IMR-90 (cell line): ENCODE measurements at regions of chr7 and their contacts with region 1.

Region 1: DNA sequence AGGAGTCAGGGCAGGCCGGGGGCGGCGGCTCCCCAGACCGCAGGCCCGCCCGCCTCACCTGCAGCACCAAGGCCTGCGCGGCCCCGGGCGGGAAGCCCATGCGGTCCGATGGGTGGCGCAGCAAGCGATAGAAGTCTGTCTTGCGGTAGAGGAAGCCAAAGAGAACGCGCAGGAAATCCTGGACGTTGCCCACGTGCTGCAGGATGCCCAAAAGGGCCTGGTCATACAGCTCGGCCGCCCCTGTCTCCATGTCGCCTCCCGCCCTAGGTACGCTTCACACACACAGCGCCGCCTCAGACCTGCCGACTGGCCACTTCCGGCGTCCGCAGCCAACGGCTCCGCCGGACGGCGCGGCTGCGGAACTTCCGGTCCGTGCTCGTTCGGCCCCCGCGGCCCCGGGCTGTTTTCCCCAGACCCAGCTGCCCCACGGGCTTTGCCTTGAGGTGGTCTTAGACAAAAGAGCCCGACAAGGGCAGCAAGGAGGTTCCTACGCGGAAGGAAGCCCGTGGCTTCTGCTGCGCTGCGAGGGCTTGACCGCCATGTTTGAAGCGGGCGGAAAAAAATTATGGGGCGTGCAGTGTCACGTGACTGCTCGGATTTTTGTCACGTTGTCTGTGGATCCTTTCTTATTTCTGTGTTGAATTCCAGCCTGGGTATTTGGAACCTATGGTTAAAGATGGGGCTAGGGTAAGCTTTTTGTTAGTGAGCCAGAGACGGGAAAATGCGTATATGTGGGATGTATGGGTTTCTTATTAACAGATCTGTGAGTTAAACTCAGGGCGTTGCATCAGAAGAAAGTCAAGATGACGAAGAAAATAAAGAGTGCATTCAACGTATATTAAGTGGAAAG is at the start of gene NUDCD3:
- DNase-seq: peak; percentile 77
- ATAC-seq: peak; percentile 95
- H3K4me3 ChIP-seq: peak within 1 kb of the TSS; percentile 94
- H3K27ac ChIP-seq: peak within 1 kb of the TSS; percentile 97
- H3K4me1 ChIP-seq: peaks cover 2% of the 10 kb centered on the region; the same call in 1 of the 2 replicates
- H3K27me3 ChIP-seq: no peaks in the 10 kb centered on the region; the same call in 1 of the 2 replicates
- CTCF ChIP-seq: peak; percentile 11; the same call in 1 of the 2 replicates
- POLR2A ChIP-seq: peak; percentile 61; the same call in 1 of the 2 replicates
- RAD21 ChIP-seq: no peak; the same call in none of the 2 replicates
- total RNA-seq, gene NUDCD3: 58.3 and 76.0 TPM in 2 replicates

Region 2: GRCh38 chr7:44293561-44294324 is 196.8 kb before region 1 on chr7:
- CTCF ChIA-PET with region 1: no interaction called
- POLR2A ChIA-PET with region 1: no interaction called
- dilution Hi-C with region 1: no loop called
- in situ Hi-C with region 1: no loop called
- intact Hi-C with region 1: no loop called
- DNase-seq: no peak
- ATAC-seq: no peak
- H3K4me3 ChIP-seq: no peak overlapping the region
- H3K27ac ChIP-seq: no peak overlapping the region
- H3K4me1 ChIP-seq: peaks cover 7% of the 10 kb centered on the region; the same call in 1 of the 2 replicates
- H3K27me3 ChIP-seq: peaks cover 41% of the 10 kb centered on the region
- CTCF ChIP-seq: no peak
- POLR2A ChIP-seq: no peak
- RAD21 ChIP-seq: no peak

Region 3: GRCh38 chr7:44559485-44559884 is 68.9 kb after region 1 on chr7:
- CTCF ChIA-PET with region 1: interaction called, 14 read pairs
- POLR2A ChIA-PET with region 1: no interaction called
- dilution Hi-C with region 1: no loop called
- in situ Hi-C with region 1: loop called (anchors 5 kb)
- intact Hi-C with region 1: no loop called
- DNase-seq: no peak
- ATAC-seq: no peak
- H3K4me3 ChIP-seq: no peak overlapping the region
- H3K27ac ChIP-seq: no peak overlapping the region
- H3K4me1 ChIP-seq: peaks cover 2% of the 10 kb centered on the region; the same call in 1 of the 2 replicates
- H3K27me3 ChIP-seq: peaks cover 4% of the 10 kb centered on the region
- CTCF ChIP-seq: no peak
- POLR2A ChIP-seq: no peak
- RAD21 ChIP-seq: no peak

Region 4: GRCh38 chr7:44565097-44565794 is 74.7 kb after region 1 on chr7:
- CTCF ChIA-PET with region 1: interaction called, 14 read pairs
- POLR2A ChIA-PET with region 1: no interaction called
- dilution Hi-C with region 1: no loop called
- in situ Hi-C with region 1: no loop called
- intact Hi-C with region 1: loop called (anchors 1 kb)
- DNase-seq: peak; percentile 49
- ATAC-seq: peak; percentile 92
- H3K4me3 ChIP-seq: no peak overlapping the region
- H3K27ac ChIP-seq: no peak overlapping the region
- H3K4me1 ChIP-seq: peaks cover 2% of the 10 kb centered on the region; the same call in 1 of the 2 replicates
- H3K27me3 ChIP-seq: no peaks in the 10 kb centered on the region
- CTCF ChIP-seq: peak; percentile 90
- POLR2A ChIP-seq: peak; percentile 39; the same call in 1 of the 2 replicates
- RAD21 ChIP-seq: peak; percentile 87